Right ventricle myocardium inferior (tissue), 1 donor: ENCODE measurements at regions of chr12 and their contacts with region 1.

Region 1: GRCh38 chr12:19129486-19130223 is at the start of gene PLEKHA5:
- DNase-seq: peak; percentile 82
- ATAC-seq: peak; percentile 92
- total RNA-seq, gene PLEKHA5: 52.6 TPM

Region 2: DNA sequence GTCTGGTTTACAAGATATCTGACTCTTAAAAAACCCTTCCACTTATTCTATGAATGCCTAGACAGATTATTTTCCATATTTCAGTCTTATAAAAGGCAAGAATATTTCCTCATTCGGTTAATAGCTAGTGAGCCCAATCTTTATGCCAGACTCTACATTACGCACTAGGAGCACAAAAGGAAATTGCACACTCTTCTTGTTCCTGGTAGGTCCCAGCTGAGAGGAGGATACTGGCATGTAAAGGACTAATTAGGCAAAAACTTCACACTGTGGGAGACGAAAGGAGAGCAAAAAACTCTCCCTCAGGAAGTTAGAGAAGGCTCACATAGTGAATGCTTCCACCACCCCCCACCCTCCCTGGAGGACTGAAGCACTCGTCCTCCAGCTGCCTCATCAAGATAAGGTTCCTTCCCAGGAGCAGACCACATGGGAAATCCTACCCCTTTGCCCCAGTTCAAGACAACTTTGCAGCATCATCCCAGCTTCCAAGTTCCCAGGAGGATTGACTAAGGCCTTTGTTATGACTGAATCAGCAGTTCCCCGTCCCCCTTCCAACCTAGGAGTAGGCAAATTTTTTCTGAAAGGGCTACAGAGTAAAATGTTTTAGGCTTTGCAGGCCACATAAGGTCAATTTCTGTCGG is 377.3 kb before region 1 on chr12:
- intact Hi-C with region 1: loop called (anchors 2 kb)
- DNase-seq: no peak
- ATAC-seq: peak; percentile 72

Region 3: GRCh38 chr12:19035536-19035935 is 94.1 kb before region 1 on chr12:
- intact Hi-C with region 1: loop called (anchors 2 kb)
- DNase-seq: no peak
- ATAC-seq: peak; percentile 74

Region 4: DNA sequence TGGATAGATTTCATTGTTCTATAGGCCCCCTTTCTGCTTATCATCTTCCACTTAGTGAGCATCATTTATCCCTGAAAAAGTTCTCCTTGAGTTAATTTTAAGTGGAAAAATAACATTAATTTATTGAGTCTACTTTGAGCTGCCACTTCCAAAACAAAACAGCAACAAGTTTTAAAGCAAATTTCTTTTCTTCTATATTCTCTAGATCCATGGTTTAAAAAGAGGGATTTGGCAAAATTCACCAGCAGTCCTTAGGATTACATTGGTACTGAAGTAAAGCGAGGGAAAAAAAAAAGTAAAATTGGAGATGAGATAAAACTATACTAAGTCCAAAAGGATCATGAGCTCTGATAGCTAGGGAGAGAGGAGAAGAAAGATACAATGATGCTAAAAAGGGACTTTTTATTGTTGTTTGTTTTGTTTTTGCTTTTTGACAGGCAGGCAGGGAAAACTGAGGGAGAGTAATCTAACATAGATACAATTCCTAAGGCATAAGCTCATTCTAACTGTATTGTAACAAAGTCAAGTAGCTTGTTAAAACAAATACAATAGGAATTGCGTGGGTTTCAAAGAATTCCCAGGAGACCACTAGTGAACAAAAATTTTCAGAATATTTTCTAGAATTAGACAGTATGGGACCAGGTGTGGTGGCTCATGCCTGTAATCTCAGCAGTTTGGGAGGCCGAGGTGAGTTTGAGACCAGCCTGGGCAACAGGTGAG is 19.3 kb before region 1 on chr12:
- intact Hi-C with region 1: no loop called
- DNase-seq: no peak
- ATAC-seq: no peak

Region 5: DNA sequence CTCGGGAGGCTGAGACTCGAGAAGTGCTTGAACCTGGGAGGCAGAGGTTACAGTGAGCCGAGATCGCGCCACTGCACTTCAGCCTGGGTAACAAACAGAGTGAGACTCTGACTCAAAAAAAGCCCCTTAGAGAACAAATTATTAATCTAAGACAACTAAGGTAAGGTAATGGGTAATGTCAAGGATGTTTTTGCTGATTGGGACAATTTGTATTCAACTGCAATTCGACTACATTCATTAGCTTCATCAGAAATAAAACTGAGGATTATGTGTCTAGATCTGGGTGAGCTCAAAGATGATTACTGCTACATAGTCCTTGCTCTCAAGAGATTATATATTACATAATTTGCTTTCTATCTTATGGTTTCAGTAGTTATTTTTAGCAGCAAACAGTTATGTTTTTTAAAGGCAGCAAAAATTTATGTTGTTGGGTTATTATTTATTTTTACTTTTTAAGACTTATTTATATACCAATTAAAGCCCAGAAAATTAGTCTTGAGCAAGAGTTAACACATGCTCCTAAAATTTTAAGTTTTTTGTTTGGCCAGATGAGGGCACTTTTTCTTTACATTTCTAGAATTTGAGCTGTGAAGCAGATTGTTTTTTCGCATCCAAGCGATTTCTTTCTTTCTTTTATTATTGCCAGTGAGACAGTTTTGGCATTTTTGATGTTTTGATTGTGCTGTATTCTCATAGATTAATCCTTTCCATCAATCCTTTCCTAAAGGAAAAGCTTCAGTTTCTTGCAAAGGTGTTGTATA is 52.2 kb after region 1 on chr12:
- intact Hi-C with region 1: loop called (anchors 2 kb)
- DNase-seq: no peak
- ATAC-seq: no peak

Region 6: GRCh38 chr12:19236656-19237055 is 107.0 kb after region 1 on chr12:
- intact Hi-C with region 1: no loop called
- DNase-seq: no peak
- ATAC-seq: peak; percentile 57

Region 7: DNA sequence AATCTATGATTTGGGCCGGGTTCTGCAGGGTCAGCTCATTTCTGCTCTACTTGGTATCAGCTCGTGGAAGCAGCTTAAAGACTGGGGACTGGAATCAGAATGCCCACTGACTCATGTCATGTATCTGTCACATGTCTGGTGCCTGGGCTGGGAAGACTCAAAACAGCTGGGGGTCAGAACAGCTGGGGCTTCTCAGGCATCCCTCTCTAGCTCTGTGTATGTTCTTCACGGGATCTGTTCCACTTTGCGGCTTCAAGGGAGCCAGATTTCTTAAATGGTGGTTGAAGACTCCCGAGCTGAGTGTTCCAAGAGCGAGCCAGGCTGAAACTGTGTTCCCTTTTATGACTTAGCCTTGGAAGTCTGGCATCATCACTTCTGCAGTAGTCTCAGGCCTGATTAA is 321.5 kb after region 1 on chr12:
- intact Hi-C with region 1: loop called (anchors 10 kb)
- DNase-seq: no peak
- ATAC-seq: peak; percentile 65